Left cardiac atrium (tissue), 4 donors: ENCODE measurements at regions of chr9 and their contacts with region 1.

Region 1: DNA sequence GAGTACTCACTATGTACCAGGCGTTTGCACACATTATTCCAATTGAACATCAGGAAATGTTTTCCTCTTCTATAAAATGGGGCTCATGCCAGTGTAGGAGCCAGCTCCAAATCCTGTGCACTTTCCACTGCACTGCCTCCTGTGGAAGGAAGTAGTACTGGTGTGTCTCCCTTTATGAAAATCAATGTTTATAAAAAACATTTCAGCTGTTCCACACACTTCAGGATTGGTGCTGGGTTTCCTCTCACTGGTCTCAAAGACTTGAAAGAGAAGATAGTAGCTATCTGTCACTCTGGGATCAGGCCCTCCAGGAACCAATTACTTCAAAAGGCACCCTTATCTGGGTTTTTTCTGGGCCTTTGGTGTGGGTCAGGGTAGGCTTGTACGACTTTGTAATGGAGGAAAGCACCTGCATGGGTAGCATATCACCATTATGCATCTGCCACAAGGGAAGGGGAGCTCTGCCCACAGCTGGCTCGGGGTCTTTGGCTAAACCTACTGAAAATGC is 32.5 kb downstream of the RAB14 start:
- DNase-seq: peak; percentile 33
- ATAC-seq: peak; percentile 70 to 79

Region 2: GRCh38 chr9:120755827-120756434 is 413.2 kb before region 1 on chr9:
- intact Hi-C with region 1: loop called in 1 of 2 experiments (anchors 10 kb)
- DNase-seq: peak; percentile 33
- ATAC-seq: peak; percentile 55 to 76

Region 3: DNA sequence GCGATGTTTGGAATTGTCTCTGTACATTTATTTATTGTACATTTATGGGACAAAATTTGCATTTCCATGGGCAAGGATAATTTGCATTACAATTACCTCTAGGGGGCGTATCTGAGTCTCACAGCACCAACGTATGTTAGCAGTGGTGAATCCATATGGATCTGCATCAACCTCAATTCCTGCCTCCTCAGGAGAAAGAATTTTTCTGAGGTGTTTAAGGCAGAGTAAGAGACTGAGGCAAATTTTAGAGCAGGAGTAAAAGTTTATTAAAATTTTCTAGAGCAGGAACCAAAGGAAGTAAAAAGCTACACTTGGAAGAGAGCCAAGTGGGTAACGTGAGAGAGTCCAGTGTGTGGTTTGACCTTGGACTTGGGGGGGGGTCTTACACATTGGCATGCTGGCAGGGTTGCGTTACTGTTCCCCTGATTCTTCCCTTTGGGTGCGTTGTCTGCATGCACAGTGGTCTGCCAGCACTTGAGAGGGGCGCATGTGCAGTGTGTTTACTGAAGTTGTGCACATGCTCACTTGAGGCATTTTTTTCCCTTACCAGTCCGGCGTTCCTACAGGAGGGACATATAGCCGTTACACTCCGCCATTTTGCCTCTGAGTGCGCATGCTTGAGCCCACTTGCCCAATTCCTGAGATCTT is 53.5 kb after region 1 on chr9:
- intact Hi-C with region 1: no loop called
- DNase-seq: no peak
- ATAC-seq: peak in 1 of 2 donors; percentile 32

Region 4: DNA sequence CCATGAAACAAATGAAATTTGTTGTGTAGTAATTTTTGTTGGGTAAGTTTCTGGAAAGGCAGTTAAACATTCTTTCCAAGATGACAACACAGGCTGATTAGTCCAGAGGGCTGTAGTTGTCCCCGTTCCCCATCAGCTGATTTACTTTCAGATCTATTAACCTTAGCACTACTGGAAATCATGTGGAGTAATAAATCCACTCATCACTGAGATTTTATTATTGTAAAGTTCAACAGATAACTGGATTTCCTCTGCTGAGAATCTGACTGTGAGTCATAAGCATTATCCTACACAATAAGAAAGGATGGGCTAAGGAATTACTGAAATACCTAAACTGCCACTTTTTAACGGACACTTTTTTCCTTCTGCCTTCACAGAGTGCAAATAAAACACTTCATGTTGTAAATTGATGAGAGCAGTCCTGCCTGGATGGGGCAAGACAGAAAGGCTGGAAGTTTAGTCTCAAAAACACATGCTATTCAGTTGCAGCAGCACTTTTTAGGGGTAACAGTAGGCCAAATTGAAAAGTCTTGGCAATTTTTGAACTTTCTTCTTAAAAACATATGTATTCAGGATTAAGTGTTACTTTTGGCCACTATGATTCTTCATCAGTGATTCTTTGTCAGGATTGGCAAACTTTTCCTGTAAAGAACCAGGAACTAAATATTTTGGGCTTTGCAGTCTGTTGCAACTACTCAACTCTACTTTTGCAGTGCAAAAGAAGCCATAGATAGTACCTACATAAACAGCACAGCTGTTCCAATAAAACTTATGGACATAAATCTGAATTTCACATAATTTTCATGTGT is 193.9 kb after region 1 on chr9:
- intact Hi-C with region 1: no loop called
- DNase-seq: no peak
- ATAC-seq: peak; percentile 27 to 77